Mammary epithelial cell (primary cell): ENCODE measurements at regions of chr1 and their contacts with region 1.

Region 1: GRCh38 chr1:154736841-154737240 is 128.9 kb upstream of the ADAR start:
- DNase-seq: peak; percentile 57
- H3K4me3 ChIP-seq: no peak overlapping the region
- H3K27ac ChIP-seq: no peak overlapping the region
- H3K4me1 ChIP-seq: no peaks in the 10 kb centered on the region
- H3K27me3 ChIP-seq: peaks cover 1% of the 10 kb centered on the region
- CTCF ChIP-seq: no peak

Region 2: GRCh38 chr1:154501423-154502065 is 235.3 kb before region 1 on chr1:
- CTCF ChIA-PET with region 1: no interaction called
- dilution Hi-C with region 1: loop called (anchors 5 kb)
- in situ Hi-C with region 1: no loop called
- intact Hi-C with region 1: no loop called
- DNase-seq: no peak
- H3K4me3 ChIP-seq: peak overlapping the region in 2 of 3 experiments; percentile 21 to 28
- H3K27ac ChIP-seq: no peak overlapping the region
- H3K4me1 ChIP-seq: peaks cover 7% of the 10 kb centered on the region
- H3K27me3 ChIP-seq: peaks cover 23% of the 10 kb centered on the region
- CTCF ChIP-seq: no peak

Region 3: GRCh38 chr1:154695985-154696384 is 40.9 kb before region 1 on chr1:
- CTCF ChIA-PET with region 1: no interaction called
- dilution Hi-C with region 1: loop called (anchors 5 kb)
- in situ Hi-C with region 1: no loop called
- intact Hi-C with region 1: no loop called
- DNase-seq: no peak
- H3K4me3 ChIP-seq: no peak overlapping the region
- H3K27ac ChIP-seq: no peak overlapping the region
- H3K4me1 ChIP-seq: peaks cover 11% of the 10 kb centered on the region
- H3K27me3 ChIP-seq: peaks cover 6% of the 10 kb centered on the region
- CTCF ChIP-seq: peak in 1 of 2 donors; percentile 27

Region 4: GRCh38 chr1:154784924-154785531 is 48.2 kb after region 1 on chr1:
- CTCF ChIA-PET with region 1: no interaction called
- dilution Hi-C with region 1: loop called (anchors 5 kb)
- in situ Hi-C with region 1: no loop called
- intact Hi-C with region 1: no loop called
- DNase-seq: no peak
- H3K4me3 ChIP-seq: no peak overlapping the region
- H3K27ac ChIP-seq: no peak overlapping the region
- H3K4me1 ChIP-seq: no peaks in the 10 kb centered on the region
- H3K27me3 ChIP-seq: no peaks in the 10 kb centered on the region
- CTCF ChIP-seq: no peak

Region 5: GRCh38 chr1:154884869-154885701 is 148.2 kb after region 1 on chr1:
- CTCF ChIA-PET with region 1: no interaction called
- dilution Hi-C with region 1: no loop called
- in situ Hi-C with region 1: no loop called
- intact Hi-C with region 1: no loop called
- DNase-seq: no peak
- H3K4me3 ChIP-seq: no peak overlapping the region
- H3K27ac ChIP-seq: no peak overlapping the region
- H3K4me1 ChIP-seq: no peaks in the 10 kb centered on the region
- H3K27me3 ChIP-seq: no peaks in the 10 kb centered on the region
- CTCF ChIP-seq: no peak